Caco-2 (cell line): ENCODE measurements at regions of chr9 and their contacts with region 1.

Region 1: DNA sequence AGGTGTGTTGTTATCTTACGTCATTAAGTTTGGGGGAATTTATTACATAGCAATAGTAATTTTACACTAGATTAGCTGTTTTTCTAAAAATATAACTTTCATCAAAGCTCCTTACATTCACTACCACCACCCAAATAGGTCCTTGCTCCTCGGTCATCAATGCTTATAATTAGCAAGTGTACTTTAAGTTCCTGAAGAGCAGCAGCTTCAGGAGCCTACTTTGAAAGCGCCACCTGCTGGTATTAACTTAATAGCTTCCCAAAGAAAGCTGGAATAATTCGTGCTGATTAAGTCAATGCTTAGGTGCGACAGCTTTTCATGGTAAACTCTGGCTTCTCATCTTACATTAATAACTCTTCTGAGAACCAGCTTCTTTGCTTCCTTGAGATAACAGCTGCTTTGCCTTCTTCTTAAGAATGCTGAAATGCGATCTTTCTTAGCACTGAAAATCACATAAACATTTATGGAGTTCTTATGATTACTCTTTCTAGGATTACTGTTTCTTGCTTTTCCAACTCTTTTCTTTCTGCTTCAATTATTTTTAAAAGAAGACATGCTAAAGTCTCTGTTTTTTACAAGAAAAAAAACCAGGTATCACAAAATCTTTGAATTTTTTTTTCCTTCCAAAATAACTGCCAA is 10.0 kb upstream of the C5 start:
- DNase-seq: peak in 1 of 2 experiments; percentile 64
- H3K4me3 ChIP-seq: no peak overlapping the region
- H3K4me3 Mint-ChIP-seq: no peak overlapping the region
- H3K27ac Mint-ChIP-seq: no peak overlapping the region
- H3K4me1 ChIP-seq: peaks cover 15% of the 10 kb centered on the region; the same call in 1 of the 2 replicates
- H3K4me1 Mint-ChIP-seq: peaks cover 20% of the 10 kb centered on the region
- H3K27me3 ChIP-seq: no peaks in the 10 kb centered on the region
- H3K27me3 Mint-ChIP-seq: no peaks in the 10 kb centered on the region
- CTCF ChIP-seq: peak; percentile 66 to 76

Region 2: DNA sequence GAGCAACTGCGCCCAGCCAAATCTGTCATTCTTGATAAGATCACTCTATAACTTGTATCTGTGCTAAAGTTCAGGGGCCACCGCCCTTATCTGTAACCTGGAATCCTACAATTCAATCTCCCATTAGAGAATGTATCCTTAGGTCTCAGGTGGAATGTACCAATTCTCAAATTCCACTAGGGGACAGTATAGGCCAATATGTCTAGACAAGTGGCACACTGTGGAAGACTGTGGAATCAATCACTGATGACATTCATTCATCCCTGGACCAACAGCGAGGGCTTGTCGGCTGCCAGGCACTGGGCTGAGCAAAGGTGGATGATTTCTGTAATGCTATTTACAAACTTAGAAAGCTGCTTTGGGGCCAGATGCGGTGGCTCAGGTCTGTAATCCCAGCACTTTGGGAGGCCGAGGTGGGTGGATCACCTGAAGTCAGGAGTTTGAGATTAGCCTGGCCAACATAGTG is 317.1 kb before region 1 on chr9:
- CTCF ChIA-PET with region 1: no interaction called
- POLR2A ChIA-PET with region 1: no interaction called
- intact Hi-C with region 1: loop called (anchors 2 kb)
- DNase-seq: peak in 1 of 2 experiments; percentile 50
- H3K4me3 ChIP-seq: no peak overlapping the region
- H3K4me3 Mint-ChIP-seq: no peak overlapping the region
- H3K27ac Mint-ChIP-seq: no peak overlapping the region
- H3K4me1 ChIP-seq: no peaks in the 10 kb centered on the region
- H3K4me1 Mint-ChIP-seq: no peaks in the 10 kb centered on the region
- H3K27me3 ChIP-seq: no peaks in the 10 kb centered on the region
- H3K27me3 Mint-ChIP-seq: no peaks in the 10 kb centered on the region
- CTCF ChIP-seq: peak; percentile 67 to 78

Region 3: GRCh38 chr9:120985810-120986222 is 74.3 kb before region 1 on chr9:
- CTCF ChIA-PET with region 1: interaction called, 73 read pairs
- POLR2A ChIA-PET with region 1: no interaction called
- intact Hi-C with region 1: loop called (anchors 1 kb)
- DNase-seq: peak in 1 of 2 experiments; percentile 55
- H3K4me3 ChIP-seq: no peak overlapping the region
- H3K4me3 Mint-ChIP-seq: no peak overlapping the region
- H3K27ac Mint-ChIP-seq: no peak overlapping the region
- H3K4me1 ChIP-seq: no peaks in the 10 kb centered on the region; the same call in 1 of the 2 replicates
- H3K4me1 Mint-ChIP-seq: peaks cover 19% of the 10 kb centered on the region
- H3K27me3 ChIP-seq: no peaks in the 10 kb centered on the region
- H3K27me3 Mint-ChIP-seq: no peaks in the 10 kb centered on the region
- CTCF ChIP-seq: peak; percentile 59 to 62

Region 4: DNA sequence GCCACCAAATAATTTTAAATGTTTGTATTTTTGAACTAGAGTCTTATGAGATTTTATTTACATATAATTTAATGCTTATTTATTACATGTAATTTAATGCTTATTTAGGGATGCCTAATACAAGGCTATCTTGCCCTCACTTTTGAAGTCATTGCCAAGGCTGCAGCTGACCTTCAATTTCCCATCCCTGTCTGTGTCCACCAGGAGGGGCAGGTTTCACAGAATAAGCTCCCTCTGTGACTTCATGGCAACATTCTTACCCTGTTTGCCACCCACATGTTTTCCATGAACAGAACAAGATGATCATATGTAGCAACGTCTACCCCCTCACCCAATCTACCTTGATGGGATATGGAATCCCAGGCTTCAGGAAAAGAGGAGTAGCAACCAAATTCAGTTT is 37.1 kb before region 1 on chr9:
- CTCF ChIA-PET with region 1: interaction called, 18 read pairs
- POLR2A ChIA-PET with region 1: no interaction called
- intact Hi-C with region 1: loop called (anchors 2 kb)
- DNase-seq: peak in 1 of 2 experiments; percentile 20
- H3K4me3 ChIP-seq: no peak overlapping the region
- H3K4me3 Mint-ChIP-seq: no peak overlapping the region
- H3K27ac Mint-ChIP-seq: no peak overlapping the region
- H3K4me1 ChIP-seq: no peaks in the 10 kb centered on the region
- H3K4me1 Mint-ChIP-seq: no peaks in the 10 kb centered on the region
- H3K27me3 ChIP-seq: no peaks in the 10 kb centered on the region
- H3K27me3 Mint-ChIP-seq: no peaks in the 10 kb centered on the region
- CTCF ChIP-seq: peak; percentile 30 to 44

Region 5: DNA sequence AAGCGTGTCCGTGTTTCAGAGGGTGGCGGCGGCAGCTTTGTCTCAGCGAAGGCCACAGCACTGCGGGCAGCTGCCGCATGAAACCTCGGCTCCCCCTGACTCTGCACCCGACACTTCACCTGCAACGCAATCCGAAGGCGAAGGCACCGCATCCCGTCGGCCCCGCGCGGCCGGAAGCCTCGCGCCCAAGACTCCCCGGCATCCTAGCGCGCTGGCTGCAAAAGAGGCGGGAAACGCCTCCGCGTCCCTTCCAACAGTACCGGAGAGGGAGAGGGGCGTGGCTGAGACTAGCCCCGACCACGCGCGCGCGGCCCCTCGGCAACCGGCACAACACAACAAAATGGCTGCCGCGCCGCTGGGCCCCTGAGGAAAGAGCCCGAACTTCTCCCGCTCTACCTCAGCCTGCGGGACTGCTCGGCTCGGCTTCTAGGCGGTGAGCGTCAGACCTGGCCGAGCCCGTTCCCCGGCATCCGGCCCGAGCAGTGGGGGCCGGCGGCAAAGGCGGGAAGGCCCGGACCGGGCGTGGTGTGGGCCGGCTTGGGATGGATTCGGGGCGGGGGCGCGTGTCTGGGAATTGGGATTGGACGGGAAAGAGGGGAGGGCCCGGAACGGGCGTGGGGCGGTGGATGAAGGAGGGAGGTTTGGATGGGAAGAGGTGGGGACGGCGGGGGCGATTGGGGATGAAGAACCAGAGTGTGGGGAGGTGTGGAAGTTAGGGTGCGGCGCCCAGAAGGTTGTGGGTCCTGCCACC is 14.7 kb after region 1 on chr9 and contains the start of gene CNTRL:
- CTCF ChIA-PET with region 1: interaction called, 3 read pairs
- POLR2A ChIA-PET with region 1: no interaction called
- intact Hi-C with region 1: loop called (anchors 1 kb)
- DNase-seq: peak; percentile 91 to 92
- H3K4me3 ChIP-seq: peak within 1 kb of the TSS; percentile 59
- H3K4me3 Mint-ChIP-seq: peak within 1 kb of the TSS; percentile 79
- H3K27ac Mint-ChIP-seq: peak within 1 kb of the TSS; percentile 74
- H3K4me1 ChIP-seq: no peaks in the 10 kb centered on the region
- H3K4me1 Mint-ChIP-seq: peaks cover 14% of the 10 kb centered on the region
- H3K27me3 ChIP-seq: no peaks in the 10 kb centered on the region
- H3K27me3 Mint-ChIP-seq: peaks cover 5% of the 10 kb centered on the region
- CTCF ChIP-seq: no peak
- total RNA-seq, gene CNTRL: 12.0 and 14.9 TPM in 2 replicates